ENCODE measurements at regions of chr2 and their contacts with region 1.

Region 1: GRCh38 chr2:241461693-241462677 is 46.4 kb downstream of the STK25 start:
- DNase-seq: no peak
- ATAC-seq: peak in 1 of 8 donors; percentile 50
- H3K4me3 ChIP-seq: no peak overlapping the region
- H3K27ac ChIP-seq: no peak overlapping the region
- H3K4me1 ChIP-seq: no peaks in the 10 kb centered on the region
- H3K27me3 ChIP-seq: peaks cover 0 to under 1% (median 0%) of the 10 kb centered on the region in 7 donors
- CTCF ChIP-seq: no peak

Region 2: DNA sequence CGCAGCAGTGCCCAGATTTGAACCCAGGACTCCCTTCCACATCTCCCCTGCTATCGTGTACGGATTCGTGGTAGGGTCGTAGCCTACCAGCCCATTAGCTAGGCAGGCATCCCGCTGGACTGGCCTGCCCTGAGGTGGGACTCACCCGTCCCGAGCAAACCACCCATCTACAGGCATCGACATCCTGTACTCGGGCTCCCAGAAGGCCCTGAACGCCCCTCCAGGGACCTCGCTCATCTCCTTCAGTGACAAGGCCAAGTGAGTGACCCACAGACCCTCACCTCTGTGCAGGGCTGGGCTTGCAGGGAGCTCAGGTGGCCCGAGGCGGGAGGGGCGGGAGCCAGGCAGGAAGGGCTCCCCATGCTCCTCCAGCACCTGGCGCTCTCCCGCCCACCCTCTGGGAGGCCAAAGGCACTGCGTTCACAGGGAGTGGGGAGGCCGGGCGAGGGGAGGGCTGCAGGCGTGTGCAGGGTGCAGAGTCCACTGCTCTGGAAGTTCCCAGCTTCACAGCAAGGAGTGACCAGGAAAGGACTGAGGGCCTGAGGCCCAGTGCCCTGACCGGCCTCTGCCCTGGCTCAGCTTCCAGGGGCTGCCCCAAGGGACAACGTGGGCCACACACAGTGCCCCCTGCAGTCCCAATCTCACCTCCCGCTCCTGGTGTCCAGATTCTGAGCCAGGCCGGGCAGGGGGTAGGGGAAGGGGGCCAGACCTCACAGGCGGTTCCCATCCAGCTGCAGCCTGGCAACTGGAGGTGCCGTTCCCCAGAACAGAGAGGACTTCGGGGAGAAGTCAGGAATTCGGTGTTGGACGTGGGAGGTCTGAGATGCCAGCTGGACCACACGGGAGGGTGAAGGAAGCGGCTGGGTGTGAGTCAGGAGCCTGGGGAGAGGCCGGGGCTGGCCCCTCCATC is 587.9 kb before region 1 on chr2:
- intact Hi-C with region 1: loop called in 1 of 10 experiments (anchors 10 kb)
- DNase-seq: no peak
- ATAC-seq: no peak
- H3K4me3 ChIP-seq: no peak overlapping the region
- H3K27ac ChIP-seq: no peak overlapping the region
- H3K4me1 ChIP-seq: no peaks in the 10 kb centered on the region
- H3K27me3 ChIP-seq: peaks cover 0 to 11% (median 0%) of the 10 kb centered on the region in 7 donors
- CTCF ChIP-seq: no peak